ENCODE measurements at regions of chr11 and their contacts with region 1.

Region 1: DNA sequence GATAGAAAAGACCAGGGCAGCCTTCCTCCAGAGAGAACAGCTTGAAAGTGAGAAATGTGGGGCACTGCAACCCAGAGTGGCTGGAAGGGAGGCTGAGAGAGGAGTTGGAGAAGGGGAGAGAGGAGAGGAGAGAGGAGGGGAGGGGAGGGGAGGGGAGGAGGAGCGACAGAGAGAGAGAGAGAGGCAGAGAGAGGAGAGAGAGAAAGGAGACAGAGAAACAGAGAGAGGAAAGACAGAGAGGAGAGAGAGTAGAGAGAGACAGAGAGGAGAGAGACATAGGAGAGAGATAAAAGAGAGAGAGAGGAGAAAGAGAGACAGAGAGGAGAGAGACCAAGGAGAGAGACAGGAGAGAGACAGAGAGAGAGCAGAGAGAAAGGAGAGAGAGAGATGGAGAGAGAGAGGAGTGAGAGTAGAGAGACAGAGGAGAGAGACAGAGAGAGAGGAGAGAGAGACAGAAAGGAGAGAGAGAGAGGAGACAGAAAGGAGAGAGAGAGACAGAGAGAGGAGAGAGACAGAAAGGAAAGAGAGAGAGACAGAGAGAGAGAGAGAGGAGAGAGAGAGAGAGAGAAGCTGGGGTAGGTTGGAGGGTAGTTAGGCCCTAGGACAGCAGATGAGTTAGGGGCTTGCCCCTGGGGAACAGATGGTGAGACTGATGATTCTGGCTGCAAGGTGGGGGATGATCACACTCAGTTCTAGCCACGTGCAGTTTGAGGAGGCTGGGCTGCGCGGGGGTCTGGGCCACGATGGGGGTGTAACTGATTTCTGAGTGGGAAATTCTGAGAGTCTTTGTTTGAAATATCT is 8.5 kb upstream of the SCYL1 start:
- DNase-seq: no peak
- ATAC-seq: no peak
- H3K4me3 ChIP-seq: no peak overlapping the region
- H3K27ac ChIP-seq: no peak overlapping the region
- H3K4me1 ChIP-seq: no peaks in the 10 kb centered on the region
- H3K27me3 ChIP-seq: no peaks in the 10 kb centered on the region

Region 2: DNA sequence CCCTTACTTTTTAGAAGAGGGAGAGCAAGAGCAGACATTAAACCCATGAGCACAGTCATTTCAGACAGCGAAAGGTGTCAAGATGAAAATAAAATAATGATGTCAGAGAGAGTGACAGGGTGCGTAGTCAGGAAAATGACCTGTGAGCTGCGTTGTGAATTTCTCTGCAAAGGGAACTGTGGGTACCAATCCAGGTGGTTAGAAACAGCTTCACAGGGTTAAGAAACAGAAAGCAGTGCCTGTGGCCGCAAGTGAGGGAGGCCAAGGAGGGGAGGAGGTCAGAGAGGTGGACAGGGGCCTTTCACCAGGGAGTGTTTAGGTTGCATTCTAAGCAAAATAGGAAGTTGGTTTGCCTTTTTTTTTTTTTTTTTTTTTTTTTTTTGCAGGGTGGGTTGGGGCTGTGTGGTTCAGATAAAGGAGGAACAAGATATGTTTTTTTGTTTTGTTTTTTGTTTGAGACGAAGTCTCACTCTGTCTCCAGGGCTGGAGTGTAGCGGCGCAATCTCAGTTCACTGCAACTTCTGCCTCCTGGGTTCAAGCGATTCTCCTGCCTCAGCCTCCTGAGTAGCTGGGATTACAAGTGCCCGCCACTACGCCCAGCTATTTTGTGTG is 153.9 kb before region 1 on chr11:
- intact Hi-C with region 1: loop called in 1 of 4 experiments (anchors 5 kb)
- DNase-seq: peak in 1 of 3 donors; percentile 17
- ATAC-seq: no peak
- H3K4me3 ChIP-seq: no peak overlapping the region
- H3K27ac ChIP-seq: no peak overlapping the region
- H3K4me1 ChIP-seq: no peaks in the 10 kb centered on the region
- H3K27me3 ChIP-seq: no peaks in the 10 kb centered on the region

Region 3: GRCh38 chr11:65382033-65382807 is 134.1 kb before region 1 on chr11 and contains the start of gene SLC25A45:
- intact Hi-C with region 1: loop called in 3 of 4 experiments (anchors 2 to 10 kb)
- DNase-seq: peak; percentile 95 to 97 (median 96)
- ATAC-seq: peak; percentile 93 to 94
- H3K4me3 ChIP-seq: peak within 1 kb of the TSS; percentile 15
- H3K27ac ChIP-seq: peak within 1 kb of the TSS; percentile 97
- H3K4me1 ChIP-seq: peaks cover 6% of the 10 kb centered on the region
- H3K27me3 ChIP-seq: no peaks in the 10 kb centered on the region
- total RNA-seq, gene SLC25A45: 6.1 to 7.7 (median 7.4) TPM

Region 4: GRCh38 chr11:65418711-65419459 is 97.5 kb before region 1 on chr11:
- intact Hi-C with region 1: loop called in 1 of 4 experiments (anchors 5 kb)
- DNase-seq: peak; percentile 99 to 100 (median 99)
- ATAC-seq: peak; percentile 63
- H3K4me3 ChIP-seq: peak overlapping the region; percentile 43
- H3K27ac ChIP-seq: peak overlapping the region; percentile 95
- H3K4me1 ChIP-seq: peaks cover 14% of the 10 kb centered on the region
- H3K27me3 ChIP-seq: no peaks in the 10 kb centered on the region

Region 5: DNA sequence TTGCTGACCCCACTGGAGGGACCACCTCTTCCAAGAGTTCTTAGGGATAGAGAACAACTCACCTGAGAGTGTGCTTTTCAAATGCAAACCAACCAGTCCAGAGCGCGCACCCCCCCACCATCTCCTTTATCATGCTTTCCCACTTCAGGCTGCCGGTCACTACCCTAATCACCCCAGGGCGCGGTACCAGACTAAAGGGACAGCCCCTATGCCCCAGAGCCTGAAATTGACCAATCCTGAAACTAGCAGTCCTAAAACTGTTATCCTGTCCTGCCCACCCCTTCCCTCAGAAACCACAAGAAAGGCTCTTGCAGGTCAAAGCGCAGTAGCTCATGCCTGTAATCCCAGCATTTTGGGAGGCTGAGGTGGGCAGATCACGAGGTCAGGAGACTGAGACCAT is 56.8 kb before region 1 on chr11:
- intact Hi-C with region 1: no loop called
- DNase-seq: peak in 1 of 3 donors; percentile 16
- ATAC-seq: no peak
- H3K4me3 ChIP-seq: no peak overlapping the region
- H3K27ac ChIP-seq: no peak overlapping the region
- H3K4me1 ChIP-seq: no peaks in the 10 kb centered on the region
- H3K27me3 ChIP-seq: no peaks in the 10 kb centered on the region

Region 6: GRCh38 chr11:65477149-65477965 is 39.0 kb before region 1 on chr11:
- intact Hi-C with region 1: loop called in 1 of 4 experiments (anchors 5 kb)
- DNase-seq: peak; percentile 98 to 99 (median 99)
- ATAC-seq: peak; percentile 92 to 93
- H3K4me3 ChIP-seq: peak overlapping the region; percentile 68
- H3K27ac ChIP-seq: peak overlapping the region; percentile 96
- H3K4me1 ChIP-seq: peaks cover 8% of the 10 kb centered on the region
- H3K27me3 ChIP-seq: no peaks in the 10 kb centered on the region

Measured in right cardiac atrium (tissue), 5 donors.